WTC11 (cell line): ENCODE measurements at regions of chr4 and their contacts with region 1.

Region 1: GRCh38 chr4:163548481-163549243 is 54.2 kb downstream of the TMA16 start:
- DNase-seq: no peak
- ATAC-seq: peak; percentile 56
- H3K4me3 Mint-ChIP-seq: no peak overlapping the region
- H3K27ac Mint-ChIP-seq: no peak overlapping the region
- H3K4me1 Mint-ChIP-seq: peaks cover 2% of the 10 kb centered on the region; the same call in 1 of the 2 replicates
- H3K27me3 Mint-ChIP-seq: no peaks in the 10 kb centered on the region
- CTCF ChIP-seq: peak; percentile 28; the same call in 1 of the 2 replicates

Region 2: DNA sequence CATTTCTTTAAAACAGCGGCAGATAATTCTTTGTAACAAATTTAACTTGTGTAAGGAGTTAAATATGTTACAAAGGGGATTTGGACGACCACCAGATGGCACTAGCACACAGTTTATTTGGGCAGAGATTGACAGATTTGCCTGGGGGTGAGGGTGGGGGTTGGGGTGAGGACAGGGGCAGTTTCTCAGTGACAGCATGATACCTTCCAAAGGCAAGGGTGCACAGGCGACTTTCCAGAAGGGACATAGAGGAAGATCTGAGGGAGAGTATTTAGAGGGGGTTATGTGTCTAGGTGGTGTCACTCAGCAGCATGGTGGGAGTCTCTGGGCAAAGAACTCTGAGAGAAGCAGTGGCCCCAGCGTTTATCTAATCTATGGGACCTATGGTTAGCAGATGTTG is 63.8 kb before region 1 on chr4:
- CTCF ChIA-PET with region 1: interaction called, 22 read pairs
- POLR2A ChIA-PET with region 1: no interaction called
- DNase-seq: peak; percentile 72
- ATAC-seq: peak; percentile 86
- H3K4me3 Mint-ChIP-seq: no peak overlapping the region
- H3K27ac Mint-ChIP-seq: no peak overlapping the region
- H3K4me1 Mint-ChIP-seq: no peaks in the 10 kb centered on the region; the same call in 1 of the 2 replicates
- H3K27me3 Mint-ChIP-seq: no peaks in the 10 kb centered on the region
- CTCF ChIP-seq: peak; percentile 30; the same call in 1 of the 2 replicates

Region 3: GRCh38 chr4:163505374-163505773 is 43.3 kb before region 1 on chr4:
- CTCF ChIA-PET with region 1: interaction called, 10 read pairs
- POLR2A ChIA-PET with region 1: interaction called, 5 read pairs
- DNase-seq: no peak
- ATAC-seq: no peak
- H3K4me3 Mint-ChIP-seq: no peak overlapping the region
- H3K27ac Mint-ChIP-seq: peak overlapping the region; percentile 10; the same call in 1 of the 2 replicates
- H3K4me1 Mint-ChIP-seq: peaks cover 32% of the 10 kb centered on the region
- H3K27me3 Mint-ChIP-seq: no peaks in the 10 kb centered on the region
- CTCF ChIP-seq: no peak

Region 4: DNA sequence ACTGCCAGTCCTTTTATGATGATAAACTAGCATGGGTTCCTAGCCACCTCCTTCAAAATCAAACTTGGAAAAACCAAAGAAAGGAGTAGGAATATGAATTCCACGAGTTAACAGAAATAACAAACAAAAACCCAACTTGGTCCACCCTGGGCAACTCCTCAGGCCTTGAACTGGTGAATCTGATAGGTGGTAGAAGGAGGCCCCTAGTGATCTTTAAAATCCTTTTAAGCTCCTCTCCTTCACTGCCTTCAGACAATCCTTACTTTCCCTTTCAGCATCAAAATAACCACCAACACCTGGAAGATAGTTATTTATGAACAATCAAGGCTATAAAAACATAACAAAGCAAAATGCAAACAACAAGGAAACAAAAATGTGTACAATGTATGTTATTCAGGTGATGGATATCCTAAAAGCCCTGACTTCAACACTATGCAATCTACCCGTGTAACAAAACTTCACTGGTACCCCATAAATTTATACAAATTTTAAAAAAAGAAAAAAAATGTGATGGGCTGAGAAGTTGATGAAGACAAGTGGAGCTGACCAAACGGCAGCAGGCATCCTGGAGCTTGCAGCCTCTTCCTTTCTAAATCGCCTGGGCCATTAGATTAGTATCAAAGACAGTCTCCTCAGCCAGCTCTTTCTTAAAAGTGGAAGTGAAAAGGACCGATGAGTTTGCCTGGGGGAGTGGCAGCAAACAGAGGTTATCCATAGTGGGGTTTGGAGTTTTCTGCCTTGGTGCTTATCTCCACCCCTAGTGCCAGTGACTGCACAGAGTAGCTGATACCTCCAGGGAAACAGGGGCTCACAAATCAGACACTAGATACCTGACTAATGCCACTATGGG is 125.4 kb after region 1 on chr4:
- CTCF ChIA-PET with region 1: interaction called, 17 read pairs
- POLR2A ChIA-PET with region 1: no interaction called
- DNase-seq: no peak
- ATAC-seq: no peak
- H3K4me3 Mint-ChIP-seq: no peak overlapping the region
- H3K27ac Mint-ChIP-seq: no peak overlapping the region
- H3K4me1 Mint-ChIP-seq: no peaks in the 10 kb centered on the region
- H3K27me3 Mint-ChIP-seq: no peaks in the 10 kb centered on the region
- CTCF ChIP-seq: no peak

Region 5: GRCh38 chr4:164012396-164013027 is 463.9 kb after region 1 on chr4:
- CTCF ChIA-PET with region 1: interaction called, 16 read pairs
- POLR2A ChIA-PET with region 1: interaction called, 4 read pairs
- DNase-seq: peak; percentile 67
- ATAC-seq: peak; percentile 100
- H3K4me3 Mint-ChIP-seq: no peak overlapping the region
- H3K27ac Mint-ChIP-seq: no peak overlapping the region
- H3K4me1 Mint-ChIP-seq: peaks cover 4% of the 10 kb centered on the region; the same call in 1 of the 2 replicates
- H3K27me3 Mint-ChIP-seq: no peaks in the 10 kb centered on the region
- CTCF ChIP-seq: peak; percentile 50